Activated CD4-positive, alpha-beta T cell treated with anti-CD3 and anti-CD28 coated beads for 36 hours (primary cell): ENCODE measurements at regions of chr16 and their contacts with region 1.

Region 1: DNA sequence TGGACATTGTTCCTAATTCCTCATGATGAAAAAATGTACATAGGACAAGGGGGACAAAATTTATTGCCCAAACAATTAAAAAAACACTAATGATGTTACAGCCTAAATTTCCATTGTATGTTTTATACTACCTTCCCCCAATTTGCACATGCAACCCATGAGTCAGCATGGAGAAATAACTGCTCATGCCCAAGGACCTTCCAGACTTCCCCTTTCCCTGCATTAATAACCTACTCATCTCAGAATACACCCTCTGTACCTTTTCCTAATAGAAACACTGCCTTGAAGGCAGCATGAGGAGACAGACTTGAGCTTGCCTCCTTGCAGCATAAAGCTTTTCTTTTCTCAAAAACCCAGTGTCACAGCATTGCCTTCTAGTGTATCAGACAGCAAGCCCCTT is 2402.8 kb downstream of the TP53TG3F start:
- DNase-seq: no peak
- ATAC-seq: no peak
- H3K4me3 Mint-ChIP-seq: no peak overlapping the region
- H3K27ac Mint-ChIP-seq: no peak overlapping the region
- H3K4me1 Mint-ChIP-seq: no peaks in the 10 kb centered on the region
- H3K27me3 Mint-ChIP-seq: no peaks in the 10 kb centered on the region

Region 2: GRCh38 chr16:35823342-35823741 is 38.9 kb before region 1 on chr16:
- CTCF ChIA-PET with region 1: no interaction called
- POLR2A ChIA-PET with region 1: no interaction called
- intact Hi-C with region 1: loop called in 1 of 2 experiments (anchors 10 kb)
- DNase-seq: no peak
- ATAC-seq: no peak
- H3K4me3 Mint-ChIP-seq: no peak overlapping the region
- H3K27ac Mint-ChIP-seq: no peak overlapping the region
- H3K4me1 Mint-ChIP-seq: no peaks in the 10 kb centered on the region
- H3K27me3 Mint-ChIP-seq: no peaks in the 10 kb centered on the region

Region 3: GRCh38 chr16:35908942-35909341 is 46.7 kb after region 1 on chr16:
- CTCF ChIA-PET with region 1: no interaction called
- POLR2A ChIA-PET with region 1: no interaction called
- intact Hi-C with region 1: no loop called
- DNase-seq: peak; percentile 24
- ATAC-seq: no peak
- H3K4me3 Mint-ChIP-seq: no peak overlapping the region
- H3K27ac Mint-ChIP-seq: no peak overlapping the region
- H3K4me1 Mint-ChIP-seq: no peaks in the 10 kb centered on the region
- H3K27me3 Mint-ChIP-seq: no peaks in the 10 kb centered on the region